ENCODE measurements at regions of chr1 and their contacts with region 1.

Region 1: GRCh38 chr1:180652792-180653191 is 21.0 kb downstream of the XPR1 start:
- DNase-seq: no peak
- ATAC-seq: no peak
- H3K4me3 ChIP-seq: no peak overlapping the region
- H3K4me3 Mint-ChIP-seq: no peak overlapping the region
- H3K27ac ChIP-seq: no peak overlapping the region
- H3K27ac Mint-ChIP-seq: peak overlapping the region in 2 of 9 donors; percentile 15 to 26
- H3K4me1 ChIP-seq: no peaks in the 10 kb centered on the region
- H3K4me1 Mint-ChIP-seq: peaks cover 6 to 22% (median 14%) of the 10 kb centered on the region in 7 donors
- H3K27me3 ChIP-seq: no peaks in the 10 kb centered on the region
- H3K27me3 Mint-ChIP-seq: no peaks in the 10 kb centered on the region

Region 2: DNA sequence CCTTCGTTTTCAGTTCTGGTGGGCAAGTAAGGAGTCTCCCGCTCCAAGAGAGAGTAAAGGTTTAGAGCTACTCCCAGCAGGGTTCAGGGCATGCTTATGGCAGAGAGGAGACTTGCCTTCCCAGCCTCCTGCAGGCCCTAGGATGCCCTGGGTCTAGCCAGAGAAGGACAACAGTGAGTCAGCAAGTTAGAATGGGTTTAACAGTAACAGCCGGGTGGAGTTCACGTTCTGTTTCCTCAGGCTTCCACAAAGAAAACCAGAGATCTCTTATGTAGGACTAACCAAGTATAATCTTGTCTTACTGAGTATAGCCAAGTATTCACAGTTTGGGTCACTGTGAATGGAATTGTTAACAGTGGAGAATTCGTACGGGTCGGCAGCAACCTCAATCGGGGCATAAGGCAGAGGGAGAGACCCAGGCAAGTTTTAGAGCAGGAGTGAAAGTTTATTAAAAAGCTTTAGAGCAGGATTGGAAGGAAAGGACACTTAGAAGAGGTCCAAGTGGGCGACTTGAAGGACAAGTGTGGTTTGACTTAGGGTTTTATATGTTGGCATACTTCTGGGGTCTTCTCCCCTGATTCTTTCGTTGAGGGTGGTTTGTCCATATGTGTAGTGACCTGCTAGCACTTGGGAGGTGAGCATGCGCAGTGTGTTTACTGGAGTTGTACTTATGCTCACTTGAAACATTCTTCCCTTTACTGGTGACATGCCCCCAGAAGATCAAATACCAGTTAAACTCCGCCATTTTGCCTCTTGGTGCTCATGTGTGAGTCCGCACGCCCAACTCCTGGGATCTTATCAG is 89.6 kb before region 1 on chr1:
- CTCF ChIA-PET with region 1: no interaction called
- POLR2A ChIA-PET with region 1: no interaction called
- intact Hi-C with region 1: no loop called
- DNase-seq: no peak
- ATAC-seq: no peak
- H3K4me3 ChIP-seq: no peak overlapping the region
- H3K4me3 Mint-ChIP-seq: no peak overlapping the region
- H3K27ac ChIP-seq: no peak overlapping the region
- H3K27ac Mint-ChIP-seq: no peak overlapping the region
- H3K4me1 ChIP-seq: no peaks in the 10 kb centered on the region
- H3K4me1 Mint-ChIP-seq: peaks cover 0 to 2% (median 0%) of the 10 kb centered on the region in 7 donors
- H3K27me3 ChIP-seq: no peaks in the 10 kb centered on the region
- H3K27me3 Mint-ChIP-seq: peaks cover 7 to 27% (median 13%) of the 10 kb centered on the region in 5 donors

Region 3: DNA sequence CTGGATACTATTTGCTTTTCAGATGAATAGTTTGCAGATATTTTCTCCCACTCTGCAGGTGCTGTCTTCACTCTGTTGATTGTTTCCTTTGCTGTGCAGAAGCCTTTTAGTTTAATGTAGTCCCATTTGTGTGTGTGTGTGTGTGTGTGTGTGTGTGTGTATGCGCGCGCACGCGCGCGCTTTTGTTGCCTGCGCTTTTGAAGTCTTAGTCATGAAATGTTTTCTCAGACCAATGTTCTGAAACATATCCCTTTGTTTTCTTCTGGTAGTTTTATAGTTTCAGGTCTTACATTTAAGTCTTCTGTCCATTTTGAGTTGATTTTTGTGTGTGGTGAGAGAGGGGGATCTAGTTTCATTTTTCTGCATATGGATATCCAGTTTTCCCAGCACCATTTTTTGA is 42.5 kb after region 1 on chr1:
- CTCF ChIA-PET with region 1: no interaction called
- POLR2A ChIA-PET with region 1: no interaction called
- intact Hi-C with region 1: loop called in 1 of 2 experiments (anchors 5 kb)
- DNase-seq: no peak
- ATAC-seq: no peak
- H3K4me3 ChIP-seq: no peak overlapping the region
- H3K4me3 Mint-ChIP-seq: peak overlapping the region in 1 of 10 donors; percentile 16
- H3K27ac ChIP-seq: no peak overlapping the region
- H3K27ac Mint-ChIP-seq: no peak overlapping the region
- H3K4me1 ChIP-seq: peaks cover 0 to 7% of the 10 kb centered on the region in 2 donors
- H3K4me1 Mint-ChIP-seq: peaks cover 0 to 51% (median 37%) of the 10 kb centered on the region in 7 donors
- H3K27me3 ChIP-seq: no peaks in the 10 kb centered on the region
- H3K27me3 Mint-ChIP-seq: no peaks in the 10 kb centered on the region